Transverse colon (tissue), 4 donors: ENCODE measurements at regions of chr2 and their contacts with region 1.

Region 1: GRCh38 chr2:237744613-237745249 is 53.8 kb upstream of the RBM44 start:
- DNase-seq: peak; percentile 82
- H3K4me3 ChIP-seq: no peak overlapping the region
- H3K27ac ChIP-seq: peak overlapping the region; percentile 42 to 86 (median 60)
- H3K4me1 ChIP-seq: peaks cover 22 to 56% (median 27%) of the 10 kb centered on the region in 4 donors
- H3K27me3 ChIP-seq: no peaks in the 10 kb centered on the region
- CTCF ChIP-seq: peak; percentile 95 to 97 (median 96)
- EP300 ChIP-seq: no peak
- POLR2A ChIP-seq: no peak

Region 2: GRCh38 chr2:237500681-237501424 is 243.9 kb before region 1 on chr2:
- in situ Hi-C with region 1: loop called in 1 of 4 experiments (anchors 10 kb)
- intact Hi-C with region 1: no loop called
- DNase-seq: no peak
- H3K4me3 ChIP-seq: no peak overlapping the region
- H3K27ac ChIP-seq: peak overlapping the region in 1 of 4 donors; percentile 33
- H3K4me1 ChIP-seq: peaks cover 0 to 18% (median 13%) of the 10 kb centered on the region in 4 donors
- H3K27me3 ChIP-seq: no peaks in the 10 kb centered on the region
- CTCF ChIP-seq: no peak
- EP300 ChIP-seq: no peak
- POLR2A ChIP-seq: no peak

Region 3: GRCh38 chr2:237581751-237582746 is 162.7 kb before region 1 on chr2:
- in situ Hi-C with region 1: loop called in 2 of 4 experiments (anchors 10 to 25 kb)
- intact Hi-C with region 1: loop called (anchors 2 kb)
- DNase-seq: peak; percentile 19
- H3K4me3 ChIP-seq: no peak overlapping the region
- H3K27ac ChIP-seq: peak overlapping the region in 3 of 4 donors; percentile 5 to 72 (median 48)
- H3K4me1 ChIP-seq: peaks cover 6 to 10% (median 8%) of the 10 kb centered on the region in 4 donors
- H3K27me3 ChIP-seq: no peaks in the 10 kb centered on the region
- CTCF ChIP-seq: peak in 3 of 5 experiments; percentile 8 to 26 (median 12)
- EP300 ChIP-seq: no peak
- POLR2A ChIP-seq: no peak

Region 4: GRCh38 chr2:237627441-237628246 is 117.1 kb before region 1 on chr2 and contains the start of gene LRRFIP1:
- in situ Hi-C with region 1: no loop called
- intact Hi-C with region 1: loop called (anchors 10 kb)
- DNase-seq: peak; percentile 20
- H3K4me3 ChIP-seq: peak within 1 kb of the TSS; percentile 57 to 73 (median 67)
- H3K27ac ChIP-seq: peak within 1 kb of the TSS; percentile 59 to 72 (median 63)
- H3K4me1 ChIP-seq: peaks cover 9 to 22% (median 13%) of the 10 kb centered on the region in 4 donors
- H3K27me3 ChIP-seq: peaks cover 24% of the 10 kb centered on the region
- CTCF ChIP-seq: no peak
- EP300 ChIP-seq: no peak
- POLR2A ChIP-seq: no peak
- total RNA-seq, gene LRRFIP1: 98.5 to 147 (median 122) TPM

Region 5: GRCh38 chr2:237674731-237675276 is 69.9 kb before region 1 on chr2:
- in situ Hi-C with region 1: loop called in 3 of 4 experiments (anchors 5 to 10 kb)
- intact Hi-C with region 1: no loop called
- DNase-seq: peak; percentile 88
- H3K4me3 ChIP-seq: peak overlapping the region in 1 of 4 donors; percentile 29
- H3K27ac ChIP-seq: peak overlapping the region; percentile 79 to 84 (median 82)
- H3K4me1 ChIP-seq: peaks cover 30 to 71% (median 47%) of the 10 kb centered on the region in 4 donors
- H3K27me3 ChIP-seq: no peaks in the 10 kb centered on the region
- CTCF ChIP-seq: peak in 1 of 5 experiments; percentile 44
- EP300 ChIP-seq: peak; percentile 42
- POLR2A ChIP-seq: peak; percentile 27